ENCODE measurements at regions of chr2 and their contacts with region 1.

Region 1: DNA sequence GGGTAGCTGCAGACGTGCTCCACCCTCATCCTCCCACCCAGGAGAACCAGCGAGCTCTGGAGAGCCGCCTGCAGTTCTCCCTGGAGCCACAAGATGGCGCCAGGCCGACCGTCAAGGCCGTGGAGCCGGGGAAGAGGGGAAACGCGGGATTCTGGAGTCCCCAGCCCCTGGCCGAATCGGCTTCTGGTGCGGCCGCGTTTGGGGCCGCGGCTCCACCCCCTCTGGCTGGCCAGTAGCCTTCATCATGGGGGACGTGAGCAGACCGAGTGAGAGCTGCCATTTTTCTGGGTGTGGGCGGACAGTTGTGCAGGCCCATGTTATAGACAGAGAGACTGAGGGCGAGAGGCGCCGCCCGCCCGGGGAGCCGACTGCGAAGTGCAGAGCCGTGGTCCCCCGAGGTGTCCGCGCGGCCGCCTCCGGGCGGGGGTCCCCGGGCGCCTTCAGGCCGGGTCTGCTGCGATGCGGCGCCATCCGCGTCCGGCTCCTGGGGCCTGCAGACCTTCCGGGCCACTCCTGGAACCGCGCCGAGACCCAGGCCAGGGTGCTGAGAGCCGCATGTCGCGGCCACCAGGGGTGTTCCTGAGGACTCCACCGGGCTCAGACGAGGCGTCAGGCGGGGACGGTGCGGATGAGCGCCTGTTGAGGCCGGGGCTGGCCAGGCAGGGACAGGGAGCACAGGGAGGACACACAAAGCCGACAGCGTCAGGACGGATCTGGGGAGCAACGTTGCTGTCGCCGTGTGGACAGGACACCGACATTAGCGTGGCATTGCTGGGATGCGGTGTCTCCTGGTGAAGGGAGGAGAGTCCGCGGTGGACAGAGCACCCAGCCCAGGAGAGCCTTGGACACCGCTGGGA is 418.2 kb upstream of the HS6ST1 start:
- DNase-seq: peak; percentile 90
- CTCF ChIP-seq: peak; percentile 99

Region 2: GRCh38 chr2:129318581-129319421 is 581.9 kb after region 1 on chr2:
- in situ Hi-C with region 1: no loop called
- DNase-seq: no peak
- CTCF ChIP-seq: no peak

Region 3: GRCh38 chr2:129849559-129850160 is 1112.7 kb after region 1 on chr2:
- in situ Hi-C with region 1: loop called (anchors 25 kb)
- DNase-seq: peak; percentile 68
- CTCF ChIP-seq: peak; percentile 58